Tibial artery (tissue), 4 donors: ENCODE measurements at regions of chr20 and their contacts with region 1.

Region 1: GRCh38 chr20:46928580-46929132 is 34.0 kb downstream of the EYA2 start:
- DNase-seq: peak in 1 of 2 donors; percentile 49
- H3K4me3 ChIP-seq: no peak overlapping the region
- H3K27ac ChIP-seq: no peak overlapping the region
- H3K4me1 ChIP-seq: peaks cover 0 to 10% (median 5%) of the 10 kb centered on the region in 4 donors
- H3K27me3 ChIP-seq: peaks cover 0 to 23% of the 10 kb centered on the region in 2 donors
- CTCF ChIP-seq: no peak

Region 2: GRCh38 chr20:46199198-46199597 is 729.5 kb before region 1 on chr20:
- intact Hi-C with region 1: loop called (anchors 10 kb)
- DNase-seq: no peak
- H3K4me3 ChIP-seq: no peak overlapping the region
- H3K27ac ChIP-seq: no peak overlapping the region
- H3K4me1 ChIP-seq: peaks cover 0 to 8% (median 0%) of the 10 kb centered on the region in 4 donors
- H3K27me3 ChIP-seq: peaks cover 0 to 79% of the 10 kb centered on the region in 2 donors
- CTCF ChIP-seq: no peak

Region 3: GRCh38 chr20:46631212-46631869 is 297.3 kb before region 1 on chr20:
- intact Hi-C with region 1: no loop called
- DNase-seq: no peak
- H3K4me3 ChIP-seq: no peak overlapping the region
- H3K27ac ChIP-seq: no peak overlapping the region
- H3K4me1 ChIP-seq: no peaks in the 10 kb centered on the region
- H3K27me3 ChIP-seq: no peaks in the 10 kb centered on the region
- CTCF ChIP-seq: no peak

Region 4: DNA sequence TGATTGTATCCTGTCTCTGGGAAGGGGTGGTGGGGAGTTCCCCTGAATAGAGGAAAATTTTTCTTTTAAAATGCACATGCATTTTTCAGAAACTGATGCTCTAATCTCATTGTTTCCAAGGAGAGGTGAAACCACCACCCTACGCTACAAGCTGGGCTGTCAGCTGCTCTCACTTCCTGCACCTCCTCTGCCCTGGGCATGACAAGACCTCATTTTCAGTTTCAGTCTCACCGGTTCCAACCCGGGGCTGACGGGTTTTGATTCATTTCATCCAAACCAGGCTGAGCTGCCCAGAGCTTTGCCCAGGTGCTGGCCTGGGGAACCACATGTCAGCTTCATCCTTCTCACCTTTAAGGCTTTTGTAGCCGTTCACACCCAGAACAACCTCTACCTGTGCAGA is 65.7 kb after region 1 on chr20:
- intact Hi-C with region 1: no loop called
- DNase-seq: no peak
- H3K4me3 ChIP-seq: no peak overlapping the region
- H3K27ac ChIP-seq: no peak overlapping the region
- H3K4me1 ChIP-seq: no peaks in the 10 kb centered on the region
- H3K27me3 ChIP-seq: peaks cover 0 to 27% of the 10 kb centered on the region in 2 donors
- CTCF ChIP-seq: no peak

Region 5: GRCh38 chr20:47066484-47067186 is 138.0 kb after region 1 on chr20:
- intact Hi-C with region 1: no loop called
- DNase-seq: no peak
- H3K4me3 ChIP-seq: no peak overlapping the region
- H3K27ac ChIP-seq: no peak overlapping the region
- H3K4me1 ChIP-seq: no peaks in the 10 kb centered on the region
- H3K27me3 ChIP-seq: no peaks in the 10 kb centered on the region
- CTCF ChIP-seq: no peak

Region 6: GRCh38 chr20:48075741-48076488 is 1147.3 kb after region 1 on chr20:
- intact Hi-C with region 1: no loop called
- DNase-seq: no peak
- H3K4me3 ChIP-seq: no peak overlapping the region
- H3K27ac ChIP-seq: no peak overlapping the region
- H3K4me1 ChIP-seq: peaks cover 0 to 6% (median 2%) of the 10 kb centered on the region in 4 donors
- H3K27me3 ChIP-seq: peaks cover 0 to 8% of the 10 kb centered on the region in 2 donors
- CTCF ChIP-seq: no peak